ENCODE measurements at regions of chr10 and their contacts with region 1.

Region 1: DNA sequence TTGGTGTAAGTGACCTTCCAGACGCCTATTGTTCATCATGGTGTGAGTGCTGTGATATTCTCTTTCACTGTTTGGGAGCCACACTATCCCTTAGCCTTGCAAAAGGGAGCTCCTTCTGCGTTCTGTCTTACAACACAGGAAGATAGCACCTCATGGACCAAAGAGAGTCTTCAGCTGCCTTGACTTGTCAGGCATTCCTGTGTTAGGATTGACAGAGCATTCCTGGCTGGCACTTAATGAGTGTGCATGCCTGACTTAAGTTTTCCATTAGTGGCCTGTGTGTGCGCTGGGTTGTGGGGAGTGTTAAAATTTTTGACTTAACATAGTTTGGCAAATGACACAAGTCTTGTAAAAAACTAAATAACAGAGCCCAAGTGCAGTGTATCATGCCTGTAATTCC is 21.9 kb upstream of the MSRB2 start:
- DNase-seq: no peak
- H3K4me3 ChIP-seq: no peak overlapping the region
- H3K27ac ChIP-seq: no peak overlapping the region
- H3K4me1 ChIP-seq: no peaks in the 10 kb centered on the region
- H3K27me3 ChIP-seq: no peaks in the 10 kb centered on the region
- CTCF ChIP-seq: no peak

Region 2: DNA sequence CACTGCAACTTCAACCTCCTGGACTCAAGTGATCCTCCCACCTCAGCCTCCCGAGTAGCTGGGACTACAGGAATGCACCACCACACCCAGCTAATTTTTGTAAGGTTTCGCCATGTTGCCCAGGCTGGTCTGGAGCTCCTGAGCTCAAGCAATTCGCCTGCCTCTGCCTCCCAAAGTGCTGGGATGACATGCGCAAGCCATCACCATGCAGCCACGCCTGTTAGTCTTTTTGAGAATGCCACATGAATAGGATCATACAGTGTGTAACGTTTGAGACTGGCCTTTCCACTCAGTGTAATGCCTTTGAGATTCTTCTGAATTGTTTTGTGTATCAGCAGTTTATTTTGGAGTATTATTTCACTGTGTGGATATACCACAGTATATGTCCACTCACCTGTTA is 53.9 kb before region 1 on chr10:
- CTCF ChIA-PET with region 1: no interaction called
- dilution Hi-C with region 1: no loop called
- in situ Hi-C with region 1: no loop called
- intact Hi-C with region 1: loop called (anchors 2 kb)
- DNase-seq: no peak
- H3K4me3 ChIP-seq: no peak overlapping the region
- H3K27ac ChIP-seq: no peak overlapping the region
- H3K4me1 ChIP-seq: no peaks in the 10 kb centered on the region
- H3K27me3 ChIP-seq: peaks cover 3% of the 10 kb centered on the region
- CTCF ChIP-seq: no peak

Measured in mammary epithelial cell (primary cell).